Naive thymus-derived CD4-positive, alpha-beta T cell (primary cell): ENCODE measurements at regions of chr16 and their contacts with region 1.

Region 1: GRCh38 chr16:89720813-89721545 is at the starts of genes VPS9D1 and ZNF276:
- DNase-seq: peak in 7 of 9 donors; percentile 73 to 88 (median 87)
- ATAC-seq: peak; percentile 67
- H3K4me3 ChIP-seq: peak within 1 kb of the TSS; percentile 94
- H3K4me3 Mint-ChIP-seq: peak within 1 kb of the TSS; percentile 88 to 99 (median 94)
- H3K27ac ChIP-seq: peak within 1 kb of the TSS; percentile 89
- H3K27ac Mint-ChIP-seq: peak within 1 kb of the TSS; percentile 88 to 99 (median 95)
- H3K4me1 ChIP-seq: peaks cover 27 to 35% of the 10 kb centered on the region in 2 donors
- H3K4me1 Mint-ChIP-seq: peaks cover 13 to 37% (median 30%) of the 10 kb centered on the region in 7 donors
- H3K27me3 ChIP-seq: no peaks in the 10 kb centered on the region
- H3K27me3 Mint-ChIP-seq: no peaks in the 10 kb centered on the region
- total RNA-seq, gene VPS9D1: 11.2 to 28.9 (median 13.3) TPM
- total RNA-seq, gene ZNF276: 75.4 to 160 (median 137) TPM

Region 2: DNA sequence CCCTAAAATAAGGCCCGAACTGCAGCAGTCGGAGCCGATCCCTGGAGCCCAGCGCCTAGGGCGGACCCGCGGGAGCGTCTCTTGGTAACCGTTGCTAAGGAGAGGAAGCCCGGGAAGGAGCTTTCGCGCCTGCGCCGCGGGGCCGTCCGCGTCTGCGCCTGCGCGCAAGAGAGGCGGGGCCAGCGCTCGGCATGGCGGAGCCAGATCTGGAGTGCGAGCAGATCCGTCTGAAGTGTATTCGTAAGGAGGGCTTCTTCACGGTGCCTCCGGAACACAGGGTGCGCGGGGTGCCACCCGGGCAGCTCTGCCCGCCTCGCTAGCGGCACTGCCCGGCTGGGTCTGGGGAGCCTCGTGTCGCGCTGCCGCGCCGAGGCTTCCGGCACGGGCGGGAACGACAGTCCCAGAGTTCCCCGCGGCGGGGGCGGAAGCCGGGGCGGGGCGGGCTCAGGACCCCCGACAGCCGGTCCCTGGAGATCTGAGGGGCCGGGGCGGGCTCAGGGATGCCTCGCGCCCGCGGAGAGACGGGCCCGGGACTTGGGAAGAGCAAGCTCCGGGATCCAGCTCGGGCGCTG is 34.4 kb before region 1 on chr16 and contains the start of gene CDK10:
- CTCF ChIA-PET with region 1: no interaction called
- POLR2A ChIA-PET with region 1: interaction called, 3 read pairs
- intact Hi-C with region 1: loop called in 1 of 2 experiments (anchors 1 kb)
- DNase-seq: peak; percentile 80 to 97 (median 89)
- ATAC-seq: peak; percentile 90
- H3K4me3 ChIP-seq: peak within 1 kb of the TSS; percentile 96
- H3K4me3 Mint-ChIP-seq: peak within 1 kb of the TSS; percentile 86 to 96 (median 92)
- H3K27ac ChIP-seq: peak within 1 kb of the TSS; percentile 93
- H3K27ac Mint-ChIP-seq: peak within 1 kb of the TSS; percentile 80 to 95 (median 92)
- H3K4me1 ChIP-seq: peaks cover 0 to 7% of the 10 kb centered on the region in 2 donors
- H3K4me1 Mint-ChIP-seq: peaks cover 9 to 18% (median 17%) of the 10 kb centered on the region in 7 donors
- H3K27me3 ChIP-seq: no peaks in the 10 kb centered on the region
- H3K27me3 Mint-ChIP-seq: no peaks in the 10 kb centered on the region
- total RNA-seq, gene CDK10: 91.5 to 150 (median 102) TPM

Region 3: GRCh38 chr16:89737341-89738071 is 16.5 kb after region 1 on chr16:
- CTCF ChIA-PET with region 1: interaction called, 6 read pairs
- POLR2A ChIA-PET with region 1: interaction called, 156 read pairs
- intact Hi-C with region 1: loop called (anchors 1 kb)
- DNase-seq: peak in 7 of 9 donors; percentile 63 to 83 (median 76)
- ATAC-seq: peak; percentile 86
- H3K4me3 ChIP-seq: no peak overlapping the region
- H3K4me3 Mint-ChIP-seq: peak overlapping the region; percentile 39 to 80 (median 66)
- H3K27ac ChIP-seq: peak overlapping the region; percentile 46
- H3K27ac Mint-ChIP-seq: peak overlapping the region; percentile 68 to 94 (median 86)
- H3K4me1 ChIP-seq: peaks cover 28 to 40% of the 10 kb centered on the region in 2 donors
- H3K4me1 Mint-ChIP-seq: peaks cover 4 to 70% (median 37%) of the 10 kb centered on the region in 7 donors
- H3K27me3 ChIP-seq: no peaks in the 10 kb centered on the region
- H3K27me3 Mint-ChIP-seq: no peaks in the 10 kb centered on the region

Region 4: DNA sequence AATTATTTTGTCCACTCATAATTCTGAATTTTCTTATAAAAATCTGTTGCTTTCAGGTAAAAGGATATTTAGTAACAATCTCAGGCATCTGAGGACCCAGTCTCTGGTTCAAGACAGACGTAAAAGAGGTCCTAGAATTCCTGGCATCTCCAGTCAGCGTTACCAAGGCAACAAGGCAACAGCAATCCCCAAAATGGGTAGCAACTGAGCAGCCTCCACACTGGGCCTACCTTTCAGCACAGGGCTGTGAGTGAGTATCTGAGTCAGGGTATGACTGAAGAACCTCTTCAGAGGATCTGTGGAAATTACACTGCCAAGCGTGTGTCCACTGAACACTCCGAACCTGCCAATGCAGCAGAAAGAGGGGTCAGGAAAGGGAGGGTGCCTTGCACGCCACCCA is 74.7 kb after region 1 on chr16:
- CTCF ChIA-PET with region 1: interaction called, 10 read pairs
- POLR2A ChIA-PET with region 1: interaction called, 13 read pairs
- intact Hi-C with region 1: loop called in 1 of 2 experiments (anchors 1 kb)
- DNase-seq: no peak
- ATAC-seq: no peak
- H3K4me3 ChIP-seq: no peak overlapping the region
- H3K4me3 Mint-ChIP-seq: no peak overlapping the region
- H3K27ac ChIP-seq: no peak overlapping the region
- H3K27ac Mint-ChIP-seq: no peak overlapping the region
- H3K4me1 ChIP-seq: no peaks in the 10 kb centered on the region
- H3K4me1 Mint-ChIP-seq: peaks cover 3 to 12% (median 10%) of the 10 kb centered on the region in 7 donors
- H3K27me3 ChIP-seq: no peaks in the 10 kb centered on the region
- H3K27me3 Mint-ChIP-seq: no peaks in the 10 kb centered on the region

Region 5: DNA sequence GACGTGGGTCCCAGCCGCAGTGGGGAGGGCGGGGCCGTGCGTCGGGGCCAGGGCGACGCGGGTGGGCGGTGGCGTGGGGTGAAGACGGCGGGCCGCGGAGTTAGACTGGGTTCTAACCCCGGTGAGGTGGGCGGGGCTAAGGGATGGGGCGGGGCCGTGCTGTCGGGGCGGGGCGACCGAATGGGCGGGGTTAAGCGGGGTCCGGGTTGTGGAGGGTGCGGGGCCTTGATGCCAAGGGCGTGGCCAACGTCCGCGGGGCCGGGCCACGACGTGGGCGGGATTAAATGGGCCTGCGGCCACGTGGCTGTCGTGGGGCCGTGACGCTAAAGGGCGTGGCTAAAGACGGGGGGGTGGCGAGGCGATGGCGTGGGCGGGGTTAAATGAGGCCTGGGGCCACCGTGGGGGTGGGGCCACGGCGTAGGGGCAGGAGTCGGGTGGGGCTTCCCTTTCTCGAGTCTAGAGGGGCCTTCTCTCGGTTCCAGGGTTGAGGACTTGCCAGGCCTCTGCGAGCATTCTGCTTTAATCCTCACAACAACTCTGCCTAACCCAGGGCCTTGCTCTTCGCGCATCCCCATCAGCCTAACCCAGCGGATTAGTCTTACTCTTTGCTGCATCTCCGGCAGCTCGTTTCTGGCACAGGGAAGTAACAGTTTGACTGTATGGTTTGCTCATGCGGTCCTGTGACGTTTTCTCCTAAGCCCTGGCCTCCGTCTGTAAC is 153.2 kb after region 1 on chr16:
- CTCF ChIA-PET with region 1: no interaction called
- POLR2A ChIA-PET with region 1: interaction called, 11 read pairs
- intact Hi-C with region 1: loop called in 1 of 2 experiments (anchors 1 kb)
- DNase-seq: peak; percentile 87 to 97 (median 90)
- ATAC-seq: peak; percentile 90
- H3K4me3 ChIP-seq: peak overlapping the region; percentile 94
- H3K4me3 Mint-ChIP-seq: peak overlapping the region; percentile 73 to 95 (median 92)
- H3K27ac ChIP-seq: peak overlapping the region; percentile 100
- H3K27ac Mint-ChIP-seq: peak overlapping the region; percentile 89 to 99 (median 97)
- H3K4me1 ChIP-seq: peaks cover 4 to 17% of the 10 kb centered on the region in 2 donors
- H3K4me1 Mint-ChIP-seq: peaks cover 6 to 32% (median 20%) of the 10 kb centered on the region in 7 donors
- H3K27me3 ChIP-seq: no peaks in the 10 kb centered on the region
- H3K27me3 Mint-ChIP-seq: no peaks in the 10 kb centered on the region

Region 6: DNA sequence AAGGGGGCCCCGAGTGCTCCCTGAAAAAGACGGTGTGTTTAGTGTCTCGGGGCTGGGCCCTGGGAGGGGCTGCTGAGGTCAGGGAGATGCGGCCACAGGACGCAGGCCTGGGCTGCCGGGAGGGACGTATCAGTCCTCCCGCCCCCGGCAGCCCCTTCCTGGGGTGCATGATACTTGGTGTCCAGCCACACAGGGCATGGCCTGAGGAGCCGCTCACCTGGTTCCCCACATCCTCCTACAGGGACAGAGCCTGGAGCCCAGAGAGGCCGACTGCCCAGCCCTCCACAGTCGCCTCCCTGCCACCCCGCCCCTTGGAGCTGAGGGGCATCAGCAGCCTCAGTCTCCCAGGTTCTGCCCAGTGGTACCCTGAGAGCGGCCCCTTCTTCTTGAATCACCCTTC is 215.5 kb after region 1 on chr16:
- CTCF ChIA-PET with region 1: no interaction called
- POLR2A ChIA-PET with region 1: no interaction called
- intact Hi-C with region 1: no loop called
- DNase-seq: no peak
- ATAC-seq: no peak
- H3K4me3 ChIP-seq: no peak overlapping the region
- H3K4me3 Mint-ChIP-seq: no peak overlapping the region
- H3K27ac ChIP-seq: no peak overlapping the region
- H3K27ac Mint-ChIP-seq: no peak overlapping the region
- H3K4me1 ChIP-seq: no peaks in the 10 kb centered on the region
- H3K4me1 Mint-ChIP-seq: no peaks in the 10 kb centered on the region
- H3K27me3 ChIP-seq: no peaks in the 10 kb centered on the region
- H3K27me3 Mint-ChIP-seq: peaks cover 0 to under 1% (median 0%) of the 10 kb centered on the region in 5 donors